ENCODE measurements at regions of chr4 and their contacts with region 1.

Region 1: GRCh38 chr4:113106108-113106507 is 56.7 kb downstream of the ANK2 start:
- DNase-seq: no peak
- ATAC-seq: peak in 2 of 4 donors; percentile 55 to 87
- H3K4me3 ChIP-seq: no peak overlapping the region
- H3K27ac ChIP-seq: no peak overlapping the region
- H3K4me1 ChIP-seq: no peaks in the 10 kb centered on the region
- H3K27me3 ChIP-seq: no peaks in the 10 kb centered on the region
- CTCF ChIP-seq: peak; percentile 49

Region 2: DNA sequence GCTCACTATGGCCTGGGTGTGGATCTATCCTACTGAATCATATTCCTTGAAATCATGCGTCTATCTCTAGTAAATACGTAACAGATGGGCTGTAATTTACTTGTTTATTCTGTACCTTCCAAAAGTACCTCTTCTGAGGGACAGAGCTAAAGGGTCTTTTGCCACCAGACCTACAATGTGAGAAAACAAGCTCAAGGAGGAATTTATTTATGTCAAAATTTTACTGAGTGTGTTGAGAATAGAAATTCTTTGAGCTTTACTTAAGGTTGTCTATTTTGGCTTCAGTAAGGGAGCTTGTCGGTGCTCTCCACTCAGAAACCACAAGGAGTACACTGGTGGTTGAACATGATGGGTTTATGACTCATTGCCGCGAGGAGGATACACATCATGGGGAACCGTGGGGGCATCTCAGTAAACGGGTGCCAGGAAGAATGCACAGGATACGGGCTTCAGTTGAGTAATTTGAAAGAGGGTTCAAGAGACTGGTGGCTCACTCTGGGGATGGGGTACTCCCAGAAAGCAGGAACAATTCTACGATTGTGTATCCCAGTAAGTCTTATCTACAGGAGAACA is 53.6 kb before region 1 on chr4:
- intact Hi-C with region 1: no loop called
- DNase-seq: no peak
- ATAC-seq: no peak
- H3K4me3 ChIP-seq: no peak overlapping the region
- H3K27ac ChIP-seq: no peak overlapping the region
- H3K4me1 ChIP-seq: peaks cover 6% of the 10 kb centered on the region
- H3K27me3 ChIP-seq: peaks cover 0 to 2% (median 0%) of the 10 kb centered on the region in 3 donors
- CTCF ChIP-seq: no peak

Region 3: GRCh38 chr4:113179996-113180395 is 73.9 kb after region 1 on chr4:
- intact Hi-C with region 1: loop called in 1 of 2 experiments (anchors 5 kb)
- DNase-seq: no peak
- ATAC-seq: peak; percentile 60 to 85 (median 80)
- H3K4me3 ChIP-seq: peak overlapping the region; percentile 29
- H3K27ac ChIP-seq: peak overlapping the region; percentile 76
- H3K4me1 ChIP-seq: peaks cover 55% of the 10 kb centered on the region
- H3K27me3 ChIP-seq: no peaks in the 10 kb centered on the region
- CTCF ChIP-seq: no peak

Region 4: GRCh38 chr4:113248320-113248719 is 142.2 kb after region 1 on chr4:
- intact Hi-C with region 1: loop called (anchors 10 kb)
- DNase-seq: peak in 1 of 2 donors; percentile 48
- ATAC-seq: peak in 1 of 4 donors; percentile 67
- H3K4me3 ChIP-seq: no peak overlapping the region
- H3K27ac ChIP-seq: no peak overlapping the region
- H3K4me1 ChIP-seq: no peaks in the 10 kb centered on the region
- H3K27me3 ChIP-seq: no peaks in the 10 kb centered on the region
- CTCF ChIP-seq: peak; percentile 25